ENCODE measurements at regions of chrX and their contacts with region 1.

Region 1: DNA sequence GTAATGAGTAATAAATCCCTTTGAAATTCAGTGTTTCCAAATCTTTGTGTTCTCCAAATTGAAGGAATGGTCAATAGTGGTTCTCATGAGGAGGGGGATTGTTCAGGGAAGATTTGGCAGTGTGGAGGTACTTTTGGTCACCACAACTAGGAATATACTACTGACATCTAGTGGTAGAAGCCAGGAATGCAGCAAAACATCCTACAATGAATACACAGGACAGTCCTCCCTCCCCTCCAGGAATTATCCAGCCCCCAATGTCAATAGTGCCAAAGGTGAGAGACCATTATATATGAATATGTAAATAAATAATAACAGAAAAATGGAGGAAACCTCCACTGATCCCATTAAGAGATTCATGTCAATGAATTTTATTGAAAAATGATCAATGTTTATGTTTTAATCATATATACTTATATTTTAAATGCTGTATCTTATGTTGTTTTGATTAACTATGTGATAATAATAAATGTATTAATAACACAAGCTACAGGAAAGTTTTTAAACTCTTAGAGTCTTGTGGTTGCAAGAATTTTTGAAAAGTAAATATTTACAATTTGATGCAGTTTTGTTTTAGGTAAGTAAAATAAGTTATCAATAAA is 14.4 kb upstream of the FAM9A start:
- DNase-seq: peak in 1 of 2 experiments; percentile 60
- H3K4me3 ChIP-seq: no peak overlapping the region
- H3K4me3 Mint-ChIP-seq: no peak overlapping the region
- H3K27ac Mint-ChIP-seq: no peak overlapping the region
- H3K4me1 ChIP-seq: no peaks in the 10 kb centered on the region
- H3K4me1 Mint-ChIP-seq: no peaks in the 10 kb centered on the region
- H3K27me3 ChIP-seq: no peaks in the 10 kb centered on the region
- H3K27me3 Mint-ChIP-seq: peaks cover under 1% of the 10 kb centered on the region
- CTCF ChIP-seq: peak; percentile 44 to 68

Region 2: DNA sequence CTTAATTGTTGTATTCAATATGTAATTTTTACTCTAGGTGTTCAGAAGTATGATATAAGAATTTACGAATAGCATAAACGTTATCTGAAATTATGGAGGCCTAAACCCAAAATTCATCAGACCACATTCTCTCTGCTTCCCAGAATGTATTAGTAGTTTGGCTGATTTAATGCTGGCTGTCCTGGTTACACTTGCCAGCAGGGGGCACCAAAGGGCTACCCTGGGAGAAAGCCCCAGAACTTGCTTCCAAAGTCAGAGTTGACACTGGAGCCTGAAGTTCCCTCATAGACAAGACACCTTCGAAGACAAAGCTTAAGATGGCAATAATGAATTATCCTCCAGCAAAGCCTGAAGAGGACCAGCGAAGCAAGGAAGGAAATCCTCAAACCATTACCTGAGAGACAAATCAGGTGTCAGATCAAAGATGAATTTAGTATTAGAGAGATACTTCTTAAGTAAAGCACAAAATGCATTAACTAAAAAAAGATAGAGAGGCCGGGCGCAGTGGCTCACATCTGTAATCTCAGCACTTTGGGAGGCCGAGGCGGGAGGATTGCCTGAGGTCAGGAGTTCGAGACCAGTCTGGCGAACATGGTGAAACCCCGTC is 72.3 kb before region 1 on chrX:
- CTCF ChIA-PET with region 1: no interaction called
- POLR2A ChIA-PET with region 1: no interaction called
- intact Hi-C with region 1: loop called (anchors 1 kb)
- DNase-seq: peak; percentile 46 to 65
- H3K4me3 ChIP-seq: no peak overlapping the region
- H3K4me3 Mint-ChIP-seq: no peak overlapping the region
- H3K27ac Mint-ChIP-seq: no peak overlapping the region
- H3K4me1 ChIP-seq: no peaks in the 10 kb centered on the region
- H3K4me1 Mint-ChIP-seq: no peaks in the 10 kb centered on the region
- H3K27me3 ChIP-seq: no peaks in the 10 kb centered on the region
- H3K27me3 Mint-ChIP-seq: peaks cover 6% of the 10 kb centered on the region
- CTCF ChIP-seq: peak; percentile 61 to 63

Region 3: GRCh38 chrX:8748855-8749254 is 66.7 kb before region 1 on chrX:
- CTCF ChIA-PET with region 1: no interaction called
- POLR2A ChIA-PET with region 1: no interaction called
- intact Hi-C with region 1: loop called (anchors 1 kb)
- DNase-seq: peak in 1 of 2 experiments; percentile 24
- H3K4me3 ChIP-seq: no peak overlapping the region
- H3K4me3 Mint-ChIP-seq: no peak overlapping the region
- H3K27ac Mint-ChIP-seq: no peak overlapping the region
- H3K4me1 ChIP-seq: no peaks in the 10 kb centered on the region
- H3K4me1 Mint-ChIP-seq: peaks cover 6% of the 10 kb centered on the region
- H3K27me3 ChIP-seq: no peaks in the 10 kb centered on the region
- H3K27me3 Mint-ChIP-seq: peaks cover 12% of the 10 kb centered on the region
- CTCF ChIP-seq: peak; percentile 45 to 65

Region 4: DNA sequence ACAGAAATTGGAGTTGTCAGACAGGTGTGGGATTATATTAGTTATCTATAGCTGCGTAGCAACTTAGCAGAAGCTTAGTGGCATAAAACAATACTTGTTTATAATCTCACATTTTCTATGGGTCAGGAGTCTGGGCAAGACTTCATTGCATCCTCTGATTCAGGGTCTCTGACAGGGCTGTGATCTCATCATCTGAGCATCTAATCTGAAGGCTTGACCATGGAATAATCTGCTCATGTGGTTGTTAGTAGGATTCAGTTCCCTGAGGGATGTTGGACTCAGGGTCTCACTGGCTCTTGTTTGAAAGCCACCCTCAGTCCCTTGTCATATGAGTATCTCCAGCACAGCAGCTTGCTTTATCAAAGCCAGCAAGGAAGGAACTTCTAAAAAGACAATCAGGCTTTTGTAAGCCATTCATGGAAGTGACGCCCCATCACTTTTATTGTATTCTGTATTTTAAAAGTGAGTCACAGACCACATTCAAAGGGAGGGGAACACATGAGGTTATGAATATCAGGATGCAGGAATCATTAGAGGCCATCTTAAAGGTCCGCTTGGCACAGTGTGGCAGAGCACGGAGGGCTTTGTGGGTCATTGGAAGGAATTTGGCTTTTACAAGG is 255.6 kb after region 1 on chrX:
- CTCF ChIA-PET with region 1: no interaction called
- POLR2A ChIA-PET with region 1: no interaction called
- intact Hi-C with region 1: no loop called
- DNase-seq: no peak
- H3K4me3 ChIP-seq: no peak overlapping the region
- H3K4me3 Mint-ChIP-seq: no peak overlapping the region
- H3K27ac Mint-ChIP-seq: no peak overlapping the region
- H3K4me1 ChIP-seq: no peaks in the 10 kb centered on the region
- H3K4me1 Mint-ChIP-seq: no peaks in the 10 kb centered on the region
- H3K27me3 ChIP-seq: no peaks in the 10 kb centered on the region
- H3K27me3 Mint-ChIP-seq: peaks cover 7% of the 10 kb centered on the region
- CTCF ChIP-seq: no peak